ENCODE measurements at regions of chr1 and their contacts with region 1.

Region 1: GRCh38 chr1:244154872-244155531 is 103.9 kb downstream of the ZBTB18 start:
- DNase-seq: peak; percentile 31 to 83 (median 74)
- H3K4me3 ChIP-seq: peak overlapping the region in 42 of 59 donors; percentile 0 to 56 (median 26)
- H3K27ac ChIP-seq: peak overlapping the region in 15 of 59 donors; percentile 4 to 65 (median 25)
- H3K27me3 ChIP-seq: no peaks in the 10 kb centered on the region
- CTCF ChIP-seq: peak in 13 of 56 donors; percentile 8 to 49 (median 18)

Region 2: DNA sequence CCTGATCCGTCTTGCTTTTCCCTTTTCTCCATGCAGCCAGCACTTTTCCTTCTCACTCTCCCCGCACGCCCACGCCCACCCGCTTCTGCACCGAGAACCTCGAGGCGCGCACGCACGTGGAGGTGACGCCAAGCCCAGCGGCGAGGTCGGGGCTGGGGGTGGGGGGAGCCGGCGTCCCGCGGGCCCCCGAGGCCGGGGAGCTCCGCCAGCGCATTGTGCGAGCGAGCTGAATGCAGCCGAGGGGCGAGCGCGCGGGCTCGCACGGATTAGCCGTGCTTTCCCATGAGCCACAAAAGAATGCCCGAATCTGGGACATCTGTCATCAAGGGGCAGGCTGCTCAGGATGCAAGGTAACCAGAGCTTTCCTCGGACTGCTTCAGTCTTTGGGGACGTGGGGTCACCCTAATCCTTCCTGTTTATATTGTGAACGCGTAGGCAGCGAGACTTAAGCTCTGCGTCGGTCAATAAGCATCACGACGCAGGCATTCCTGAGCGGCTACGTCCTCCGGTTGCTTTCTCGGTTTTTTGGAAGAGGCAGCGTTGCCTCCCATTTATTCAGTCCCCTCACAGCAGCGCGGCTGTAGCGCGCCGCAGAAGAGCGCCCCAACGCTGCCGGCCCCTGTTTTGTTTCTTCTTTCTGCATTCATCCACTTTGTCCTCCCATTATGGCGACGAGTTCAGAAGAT is 237.7 kb before region 1 on chr1:
- intact Hi-C with region 1: no loop called
- DNase-seq: peak; percentile 28 to 75 (median 54)
- H3K4me3 ChIP-seq: peak overlapping the region; percentile 39 to 87 (median 69)
- H3K27ac ChIP-seq: peak overlapping the region in 56 of 59 donors; percentile 9 to 92 (median 78)
- H3K27me3 ChIP-seq: no peaks in the 10 kb centered on the region
- CTCF ChIP-seq: peak in 46 of 56 donors; percentile 7 to 65 (median 39)

Region 3: DNA sequence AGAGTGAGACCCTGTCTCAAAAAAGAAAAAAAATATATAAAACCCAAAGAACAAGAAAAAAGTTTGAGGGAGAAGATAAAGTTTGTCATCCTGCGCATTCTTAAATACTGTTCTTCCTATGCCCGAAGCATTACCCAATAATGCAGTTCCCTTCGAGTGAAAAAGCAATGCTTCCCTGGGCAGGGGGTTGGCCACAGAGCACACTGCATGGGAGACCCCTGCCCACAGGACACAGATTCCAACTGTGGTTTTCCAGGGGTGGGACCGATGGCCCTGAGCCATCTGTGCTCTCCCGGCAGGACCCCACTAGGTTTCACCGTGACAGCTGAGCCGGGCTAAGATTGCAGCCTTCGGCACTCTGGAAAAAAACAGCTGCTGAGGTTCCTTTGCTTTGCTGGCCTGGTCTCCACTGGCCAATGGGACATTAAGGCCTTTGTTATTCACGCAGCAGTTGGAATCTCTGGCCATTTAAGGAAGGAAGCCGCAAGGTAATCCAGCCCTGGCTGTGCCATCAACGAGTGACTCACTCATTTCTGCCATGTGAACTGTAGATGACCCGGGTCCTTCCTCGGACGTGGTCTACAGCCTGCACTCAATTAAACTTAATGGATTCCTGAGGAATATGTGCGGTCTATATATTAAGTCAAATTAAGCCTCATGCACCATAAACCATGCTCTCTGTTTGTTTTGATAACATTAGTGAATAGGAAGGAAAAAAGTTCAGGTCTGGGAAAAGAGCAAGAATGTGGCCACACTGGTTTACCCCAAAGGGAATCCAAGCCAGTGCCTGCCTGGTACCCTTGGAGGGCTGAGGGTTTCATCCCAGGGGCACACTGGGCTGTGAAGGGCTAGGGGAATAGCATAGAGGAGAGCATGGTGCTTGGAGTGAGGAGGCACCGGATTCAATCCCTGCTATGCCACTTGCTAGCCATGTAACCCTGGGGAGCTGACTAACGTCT is 59.3 kb after region 1 on chr1:
- intact Hi-C with region 1: loop called in 1 of 2 experiments (anchors 5 kb)
- DNase-seq: no peak
- H3K4me3 ChIP-seq: no peak overlapping the region
- H3K27ac ChIP-seq: no peak overlapping the region
- H3K27me3 ChIP-seq: no peaks in the 10 kb centered on the region
- CTCF ChIP-seq: no peak